ENCODE measurements at regions of chr1 and their contacts with region 1.

Region 1: GRCh38 chr1:111222308-111223125 is 5.0 kb upstream of the CHI3L2 start:
- DNase-seq: peak in 8 of 9 donors; percentile 51 to 83 (median 62)
- ATAC-seq: peak; percentile 62
- H3K4me3 ChIP-seq: peak overlapping the region; percentile 55
- H3K4me3 Mint-ChIP-seq: peak overlapping the region; percentile 77 to 92 (median 84)
- H3K27ac ChIP-seq: peak overlapping the region; percentile 77
- H3K27ac Mint-ChIP-seq: peak overlapping the region; percentile 85 to 100 (median 97)
- H3K4me1 ChIP-seq: peaks cover 92% of the 10 kb centered on the region in 2 donors
- H3K4me1 Mint-ChIP-seq: peaks cover 78 to 100% (median 97%) of the 10 kb centered on the region in 7 donors
- H3K27me3 ChIP-seq: no peaks in the 10 kb centered on the region
- H3K27me3 Mint-ChIP-seq: no peaks in the 10 kb centered on the region

Region 2: GRCh38 chr1:110630839-110631663 is 591.5 kb before region 1 on chr1:
- CTCF ChIA-PET with region 1: interaction called, 3 read pairs
- POLR2A ChIA-PET with region 1: no interaction called
- intact Hi-C with region 1: loop called in 1 of 2 experiments (anchors 10 kb)
- DNase-seq: peak; percentile 74 to 87 (median 84)
- ATAC-seq: peak; percentile 87
- H3K4me3 ChIP-seq: peak overlapping the region; percentile 50
- H3K4me3 Mint-ChIP-seq: no peak overlapping the region
- H3K27ac ChIP-seq: peak overlapping the region; percentile 57
- H3K27ac Mint-ChIP-seq: no peak overlapping the region
- H3K4me1 ChIP-seq: peaks cover 58 to 59% of the 10 kb centered on the region in 2 donors
- H3K4me1 Mint-ChIP-seq: peaks cover 38 to 62% (median 52%) of the 10 kb centered on the region in 7 donors
- H3K27me3 ChIP-seq: no peaks in the 10 kb centered on the region
- H3K27me3 Mint-ChIP-seq: no peaks in the 10 kb centered on the region

Region 3: DNA sequence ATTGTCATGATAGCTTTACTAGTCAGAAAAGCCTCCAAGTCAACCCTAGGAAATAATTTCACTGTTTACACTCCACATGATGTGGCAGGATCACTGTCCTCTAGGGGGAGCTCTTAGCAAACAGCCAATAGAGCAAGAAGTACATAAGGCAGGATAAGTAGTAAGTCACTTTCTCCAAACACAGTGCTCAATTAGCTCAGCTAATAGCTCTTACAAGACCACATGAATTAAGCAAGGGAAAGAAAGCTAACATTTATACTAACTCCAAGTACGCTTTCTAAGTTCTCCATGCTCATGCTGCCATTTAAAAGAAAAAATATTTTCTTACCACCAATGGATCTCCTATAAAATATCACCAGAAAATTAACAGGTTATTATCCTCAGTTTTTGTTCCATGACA is 191.9 kb before region 1 on chr1:
- CTCF ChIA-PET with region 1: interaction called, 8 read pairs
- POLR2A ChIA-PET with region 1: interaction called, 3 read pairs
- intact Hi-C with region 1: loop called (anchors 1 to 2 kb)
- DNase-seq: peak in 8 of 9 donors; percentile 20 to 69 (median 56)
- ATAC-seq: peak; percentile 66
- H3K4me3 ChIP-seq: no peak overlapping the region
- H3K4me3 Mint-ChIP-seq: no peak overlapping the region
- H3K27ac ChIP-seq: no peak overlapping the region
- H3K27ac Mint-ChIP-seq: peak overlapping the region in 2 of 9 donors; percentile 3 to 22
- H3K4me1 ChIP-seq: no peaks in the 10 kb centered on the region
- H3K4me1 Mint-ChIP-seq: peaks cover 0 to 5% (median 0%) of the 10 kb centered on the region in 7 donors
- H3K27me3 ChIP-seq: no peaks in the 10 kb centered on the region
- H3K27me3 Mint-ChIP-seq: peaks cover 0 to 28% (median 13%) of the 10 kb centered on the region in 5 donors

Region 4: DNA sequence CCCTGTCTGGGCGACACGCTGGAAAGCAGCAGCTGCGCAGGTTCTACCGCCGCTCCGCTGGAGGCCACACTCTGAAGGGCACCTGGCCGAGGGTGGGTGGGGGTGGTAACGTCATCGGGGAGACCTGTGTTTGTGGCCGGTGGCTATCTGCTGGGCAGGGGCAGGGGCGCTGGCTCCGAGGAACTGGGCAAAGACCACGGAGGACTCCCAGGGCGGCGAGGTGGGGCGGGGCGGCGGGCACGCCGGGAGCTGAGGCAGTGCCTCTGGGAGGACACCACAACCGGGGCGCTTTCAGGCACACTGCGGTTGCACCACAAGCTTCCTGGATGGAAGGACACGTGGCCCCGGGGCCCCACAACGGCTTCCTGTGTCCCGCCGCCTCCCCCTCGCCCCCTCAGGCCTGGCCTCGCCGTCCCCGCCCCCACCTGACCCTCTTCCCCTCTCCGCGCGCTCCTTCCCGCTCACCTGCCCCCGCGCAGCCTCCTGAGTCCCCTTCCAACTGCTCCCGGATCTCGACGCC is 18.8 kb before region 1 on chr1:
- CTCF ChIA-PET with region 1: interaction called, 341 read pairs
- POLR2A ChIA-PET with region 1: interaction called, 1,128 read pairs
- intact Hi-C with region 1: loop called in 1 of 2 experiments (anchors 1 kb)
- DNase-seq: peak; percentile 51 to 86 (median 82)
- ATAC-seq: peak; percentile 71
- H3K4me3 ChIP-seq: peak overlapping the region; percentile 84
- H3K4me3 Mint-ChIP-seq: peak overlapping the region; percentile 90 to 100 (median 99)
- H3K27ac ChIP-seq: peak overlapping the region; percentile 90
- H3K27ac Mint-ChIP-seq: peak overlapping the region; percentile 80 to 99 (median 96)
- H3K4me1 ChIP-seq: peaks cover 30 to 32% of the 10 kb centered on the region in 2 donors
- H3K4me1 Mint-ChIP-seq: peaks cover 32 to 76% (median 61%) of the 10 kb centered on the region in 7 donors
- H3K27me3 ChIP-seq: no peaks in the 10 kb centered on the region
- H3K27me3 Mint-ChIP-seq: no peaks in the 10 kb centered on the region

Region 5: GRCh38 chr1:111399792-111400610 is 177.5 kb after region 1 on chr1:
- CTCF ChIA-PET with region 1: interaction called, 16 read pairs
- POLR2A ChIA-PET with region 1: interaction called, 5 read pairs
- intact Hi-C with region 1: loop called (anchors 1 kb)
- DNase-seq: peak in 6 of 9 donors; percentile 19 to 43 (median 32)
- ATAC-seq: no peak
- H3K4me3 ChIP-seq: no peak overlapping the region
- H3K4me3 Mint-ChIP-seq: peak overlapping the region in 1 of 10 donors; percentile 35
- H3K27ac ChIP-seq: no peak overlapping the region
- H3K27ac Mint-ChIP-seq: peak overlapping the region in 1 of 9 donors; percentile 46
- H3K4me1 ChIP-seq: no peaks in the 10 kb centered on the region
- H3K4me1 Mint-ChIP-seq: peaks cover 3 to 17% (median 13%) of the 10 kb centered on the region in 7 donors
- H3K27me3 ChIP-seq: no peaks in the 10 kb centered on the region
- H3K27me3 Mint-ChIP-seq: peaks cover 0 to 64% (median 0%) of the 10 kb centered on the region in 5 donors

Region 6: GRCh38 chr1:111603979-111604378 is 381.5 kb after region 1 on chr1:
- CTCF ChIA-PET with region 1: no interaction called
- POLR2A ChIA-PET with region 1: no interaction called
- intact Hi-C with region 1: loop called in 1 of 2 experiments (anchors 5 kb)
- DNase-seq: peak; percentile 33 to 88 (median 80)
- ATAC-seq: peak; percentile 99
- H3K4me3 ChIP-seq: no peak overlapping the region
- H3K4me3 Mint-ChIP-seq: peak overlapping the region; percentile 44 to 84 (median 72)
- H3K27ac ChIP-seq: peak overlapping the region; percentile 57
- H3K27ac Mint-ChIP-seq: peak overlapping the region; percentile 83 to 98 (median 89)
- H3K4me1 ChIP-seq: peaks cover 49 to 77% of the 10 kb centered on the region in 2 donors
- H3K4me1 Mint-ChIP-seq: peaks cover 48 to 77% (median 74%) of the 10 kb centered on the region in 7 donors
- H3K27me3 ChIP-seq: no peaks in the 10 kb centered on the region
- H3K27me3 Mint-ChIP-seq: no peaks in the 10 kb centered on the region